ENCODE measurements at regions of chr12 and their contacts with region 1.

Region 1: GRCh38 chr12:75505706-75506312 is 5.6 kb downstream of the KRR1 start:
- DNase-seq: no peak
- H3K4me3 Mint-ChIP-seq: no peak overlapping the region
- H3K27ac Mint-ChIP-seq: no peak overlapping the region
- H3K4me1 Mint-ChIP-seq: peaks cover 27% of the 10 kb centered on the region
- H3K27me3 Mint-ChIP-seq: no peaks in the 10 kb centered on the region

Region 2: DNA sequence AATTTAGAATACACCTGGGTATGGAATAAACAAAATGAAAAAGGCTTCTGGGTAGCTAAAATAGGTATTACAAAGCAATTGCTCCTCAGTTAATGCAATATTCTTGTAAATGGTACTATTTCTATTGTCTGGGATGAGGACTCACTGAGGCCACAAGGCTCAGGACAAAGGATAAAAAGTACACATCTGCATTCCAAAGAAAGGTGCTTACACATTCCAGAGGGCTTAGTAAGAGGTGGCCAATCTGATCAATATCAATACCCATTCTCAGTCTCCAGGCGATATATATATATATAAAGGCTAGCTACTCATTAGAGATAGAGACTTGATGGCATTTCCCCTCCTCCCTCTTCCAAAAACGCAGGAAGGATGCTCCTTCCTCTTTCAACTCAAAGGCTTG is 924.4 kb before region 1 on chr12:
- CTCF ChIA-PET with region 1: no interaction called
- DNase-seq: no peak
- H3K4me3 Mint-ChIP-seq: no peak overlapping the region
- H3K27ac Mint-ChIP-seq: no peak overlapping the region
- H3K4me1 Mint-ChIP-seq: no peaks in the 10 kb centered on the region
- H3K27me3 Mint-ChIP-seq: no peaks in the 10 kb centered on the region

Region 3: GRCh38 chr12:75334384-75335030 is 171.3 kb before region 1 on chr12 and contains the start of gene GLIPR1L1:
- CTCF ChIA-PET with region 1: interaction called, 20 read pairs
- DNase-seq: peak; percentile 87
- H3K4me3 Mint-ChIP-seq: peak within 1 kb of the TSS; percentile 48
- H3K27ac Mint-ChIP-seq: no peak within 1 kb of the TSS
- H3K4me1 Mint-ChIP-seq: peaks cover 30% of the 10 kb centered on the region
- H3K27me3 Mint-ChIP-seq: peaks cover 30% of the 10 kb centered on the region

Region 4: DNA sequence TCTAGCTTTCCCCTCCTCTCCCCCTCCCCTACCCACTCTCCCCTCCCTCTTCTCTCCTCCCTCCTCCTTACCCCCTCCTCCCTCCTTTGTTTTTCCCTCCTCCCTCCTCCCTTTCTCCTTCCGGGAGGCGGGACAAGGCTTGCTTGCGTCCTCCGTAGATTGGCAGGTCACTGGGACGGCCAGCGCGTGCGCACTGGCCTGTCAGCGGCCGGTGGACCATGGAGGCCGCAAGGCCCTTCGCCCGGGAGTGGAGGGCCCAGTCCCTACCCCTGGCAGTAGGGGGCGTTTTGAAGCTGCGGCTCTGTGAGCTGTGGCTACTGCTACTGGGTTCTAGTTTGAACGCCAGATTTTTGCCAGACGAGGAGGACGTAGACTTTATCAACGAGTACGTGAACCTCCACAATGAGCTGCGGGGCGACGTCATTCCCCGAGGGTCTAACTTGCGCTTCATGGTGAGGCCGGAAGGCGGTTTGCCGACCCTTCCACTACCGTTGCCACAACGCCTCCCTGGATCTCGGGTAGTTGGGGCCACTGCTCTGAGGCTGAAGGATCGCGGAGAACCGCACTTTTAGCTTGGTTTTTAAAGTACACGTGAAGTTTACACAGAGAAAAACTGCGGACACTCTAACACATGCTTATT is 114.8 kb before region 1 on chr12 and contains the start of gene GLIPR1L2:
- CTCF ChIA-PET with region 1: interaction called, 13 read pairs
- DNase-seq: peak; percentile 89
- H3K4me3 Mint-ChIP-seq: peak within 1 kb of the TSS; percentile 85
- H3K27ac Mint-ChIP-seq: peak within 1 kb of the TSS; percentile 80
- H3K4me1 Mint-ChIP-seq: peaks cover 38% of the 10 kb centered on the region
- H3K27me3 Mint-ChIP-seq: no peaks in the 10 kb centered on the region

Region 5: GRCh38 chr12:75564398-75564797 is 58.6 kb after region 1 on chr12:
- CTCF ChIA-PET with region 1: no interaction called
- DNase-seq: no peak
- H3K4me3 Mint-ChIP-seq: no peak overlapping the region
- H3K27ac Mint-ChIP-seq: no peak overlapping the region
- H3K4me1 Mint-ChIP-seq: no peaks in the 10 kb centered on the region
- H3K27me3 Mint-ChIP-seq: peaks cover 8% of the 10 kb centered on the region

Measured in activated naive CD4-positive, alpha-beta T cell treated with anti-CD3 and anti-CD28 coated beads, Interleukin-2, amount 10 ng/mL, durations not matched to agents 7 days and 5 days (primary cell).